Transverse colon (tissue), 4 donors: ENCODE measurements at regions of chr22 and their contacts with region 1.

Region 1: GRCh38 chr22:38122616-38123357 is 12.3 kb upstream of the BAIAP2L2 start:
- DNase-seq: no peak
- H3K4me3 ChIP-seq: no peak overlapping the region
- H3K27ac ChIP-seq: no peak overlapping the region
- H3K4me1 ChIP-seq: peaks cover 0 to 5% (median 2%) of the 10 kb centered on the region in 4 donors
- H3K27me3 ChIP-seq: no peaks in the 10 kb centered on the region
- CTCF ChIP-seq: no peak
- EP300 ChIP-seq: no peak
- POLR2A ChIP-seq: no peak

Region 2: GRCh38 chr22:37965940-37966664 is 156.7 kb before region 1 on chr22:
- in situ Hi-C with region 1: no loop called
- intact Hi-C with region 1: no loop called
- DNase-seq: no peak
- H3K4me3 ChIP-seq: no peak overlapping the region
- H3K27ac ChIP-seq: no peak overlapping the region
- H3K4me1 ChIP-seq: peaks cover 0 to 5% (median 1%) of the 10 kb centered on the region in 4 donors
- H3K27me3 ChIP-seq: no peaks in the 10 kb centered on the region
- CTCF ChIP-seq: no peak
- EP300 ChIP-seq: no peak
- POLR2A ChIP-seq: no peak

Region 3: GRCh38 chr22:38043151-38044039 is 79.4 kb before region 1 on chr22:
- in situ Hi-C with region 1: no loop called
- intact Hi-C with region 1: loop called (anchors 2 kb)
- DNase-seq: no peak
- H3K4me3 ChIP-seq: no peak overlapping the region
- H3K27ac ChIP-seq: no peak overlapping the region
- H3K4me1 ChIP-seq: no peaks in the 10 kb centered on the region
- H3K27me3 ChIP-seq: no peaks in the 10 kb centered on the region
- CTCF ChIP-seq: no peak
- EP300 ChIP-seq: no peak
- POLR2A ChIP-seq: no peak

Region 4: DNA sequence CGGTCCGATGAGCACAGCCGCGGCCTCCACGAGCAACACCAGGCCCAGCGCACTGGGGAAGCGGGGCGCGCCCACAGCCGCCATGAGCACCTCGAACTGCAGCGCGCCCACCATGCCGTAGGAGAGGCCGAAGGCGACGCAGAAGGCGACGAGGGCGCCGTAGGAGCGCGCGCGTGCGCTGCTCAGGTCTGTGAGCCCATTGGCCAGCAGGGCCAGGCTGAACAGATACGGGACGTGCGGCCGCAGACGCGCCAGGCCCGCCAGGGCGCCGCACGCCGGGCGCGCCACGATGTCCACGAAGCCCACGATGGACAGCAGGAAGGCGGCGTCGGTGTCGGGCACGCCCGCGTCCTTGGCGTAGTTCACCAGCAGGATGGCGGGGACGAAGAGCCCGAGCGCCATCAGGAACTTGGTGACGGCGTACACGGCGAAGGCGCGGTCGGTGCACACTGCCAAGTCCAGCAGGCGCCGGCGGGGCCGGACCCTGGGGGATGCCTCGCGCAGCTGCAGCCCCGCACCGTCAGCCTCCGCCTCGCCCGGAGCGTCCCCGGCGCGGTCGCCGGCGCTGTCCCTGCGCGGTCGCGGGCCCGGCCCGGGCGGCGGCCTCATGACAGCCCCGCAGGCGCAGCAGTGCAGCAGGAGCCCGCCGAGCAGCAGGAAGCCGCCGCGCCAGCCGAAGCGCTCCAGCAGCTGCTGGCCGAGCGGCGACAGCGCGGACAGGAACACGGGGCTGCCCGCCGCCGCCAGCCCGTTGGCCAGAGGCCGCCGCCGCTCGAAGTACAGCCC is 41.7 kb before region 1 on chr22:
- in situ Hi-C with region 1: no loop called
- intact Hi-C with region 1: no loop called
- DNase-seq: peak; percentile 22
- H3K4me3 ChIP-seq: peak overlapping the region in 3 of 4 donors; percentile 12 to 45 (median 34)
- H3K27ac ChIP-seq: no peak overlapping the region
- H3K4me1 ChIP-seq: peaks cover 4 to 22% (median 21%) of the 10 kb centered on the region in 4 donors
- H3K27me3 ChIP-seq: peaks cover 27% of the 10 kb centered on the region
- CTCF ChIP-seq: no peak
- EP300 ChIP-seq: no peak
- POLR2A ChIP-seq: no peak